Heart right ventricle (tissue), 16 donors: ENCODE measurements at regions of chr2 and their contacts with region 1.

Region 1: DNA sequence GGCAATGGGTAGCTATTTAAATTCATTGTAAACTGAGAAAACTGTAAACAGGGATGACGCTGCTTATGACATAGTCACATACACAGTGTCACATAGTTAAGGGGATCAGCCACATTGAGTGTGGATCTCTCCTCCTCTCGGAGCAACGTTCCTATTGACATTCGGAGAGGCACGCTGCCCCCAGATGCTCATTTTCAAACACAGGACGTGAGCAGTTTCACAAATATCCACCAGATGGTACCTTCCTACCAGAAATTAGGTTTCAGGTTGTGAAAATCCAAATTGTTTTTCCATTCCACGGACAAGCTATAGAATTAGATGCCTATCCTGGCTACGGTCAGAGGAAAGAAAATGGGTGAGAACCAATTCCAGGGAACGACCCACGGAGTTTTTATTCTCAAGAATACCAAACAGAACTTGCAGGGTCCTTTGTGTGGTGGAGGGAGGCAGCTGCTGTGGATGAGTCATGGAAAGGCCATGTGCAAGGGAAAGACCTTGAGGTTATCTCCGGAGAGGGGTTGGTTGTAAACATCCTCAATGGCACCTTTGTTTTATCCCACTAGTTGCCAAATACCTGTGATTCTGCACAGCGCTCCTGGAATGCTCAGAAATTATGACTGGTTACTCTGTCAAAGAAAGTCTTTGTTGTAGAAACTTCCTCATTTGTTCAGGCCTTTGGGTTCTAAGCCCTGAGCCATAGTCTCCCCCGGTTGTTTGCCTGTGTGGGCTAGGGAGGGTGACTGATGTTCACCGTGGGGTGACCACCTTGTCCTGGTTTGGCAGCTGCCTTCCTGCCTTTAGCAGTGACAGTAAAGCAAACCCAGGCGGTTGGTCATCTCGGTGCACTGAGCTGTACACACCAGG is 88.0 kb downstream of the ACTR3 start:
- DNase-seq: no peak
- ATAC-seq: peak in 3 of 8 donors; percentile 23 to 29 (median 27)
- H3K4me3 ChIP-seq: no peak overlapping the region
- H3K27ac ChIP-seq: no peak overlapping the region
- H3K4me1 ChIP-seq: peaks cover 0 to 11% (median 0%) of the 10 kb centered on the region in 9 donors
- H3K27me3 ChIP-seq: no peaks in the 10 kb centered on the region
- CTCF ChIP-seq: peak in 7 of 9 donors; percentile 19 to 54 (median 41)

Region 2: DNA sequence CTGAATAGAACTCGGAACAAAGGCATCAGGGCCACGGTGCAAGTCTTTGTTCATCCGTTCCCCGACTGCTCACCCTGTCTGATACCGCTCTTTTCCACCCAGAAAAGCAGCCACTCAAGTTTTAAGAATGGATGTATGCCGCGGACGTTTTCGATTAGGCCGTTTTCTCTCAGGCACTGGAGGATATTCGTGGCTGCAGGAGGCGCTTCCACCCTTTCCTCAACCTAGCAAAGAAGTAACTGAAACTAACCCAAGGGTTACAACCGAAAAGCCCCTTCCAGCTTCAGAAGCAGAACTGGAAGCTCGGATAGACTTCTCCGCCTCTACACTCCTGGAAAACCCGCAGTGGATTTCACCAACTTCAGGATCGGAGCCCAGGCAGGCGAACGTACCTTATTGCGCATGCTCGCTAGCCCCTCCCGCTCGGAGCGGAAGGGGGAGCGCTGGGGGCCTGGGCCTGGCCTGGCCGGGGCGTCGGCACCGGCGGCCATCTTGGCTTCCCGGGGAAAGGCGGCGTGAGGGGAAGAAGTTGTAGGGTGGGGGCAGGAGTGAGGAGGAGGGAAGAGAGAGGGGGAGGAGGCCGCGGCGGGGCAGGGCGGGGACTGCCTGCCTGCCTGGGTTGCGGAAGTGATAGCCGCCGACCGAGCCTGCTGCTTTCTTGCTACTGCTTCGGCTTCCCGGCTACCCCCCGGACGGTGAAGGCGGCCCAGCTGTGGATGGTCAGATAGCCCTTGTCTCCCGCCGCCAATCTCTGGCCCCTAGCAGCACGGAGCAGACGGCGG is 88.2 kb before region 1 on chr2 and contains the start of gene ACTR3:
- intact Hi-C with region 1: no loop called
- DNase-seq: peak; percentile 98
- ATAC-seq: peak; percentile 98 to 99 (median 98)
- H3K4me3 ChIP-seq: peak within 1 kb of the TSS; percentile 78 to 98 (median 96)
- H3K27ac ChIP-seq: peak within 1 kb of the TSS; percentile 81 to 100 (median 98)
- H3K4me1 ChIP-seq: peaks cover 3 to 75% (median 61%) of the 10 kb centered on the region in 9 donors
- H3K27me3 ChIP-seq: no peaks in the 10 kb centered on the region
- CTCF ChIP-seq: peak in 3 of 9 donors; percentile 17 to 31 (median 23)
- total RNA-seq, gene ACTR3: 97.0 to 167 (median 116) TPM

Region 3: DNA sequence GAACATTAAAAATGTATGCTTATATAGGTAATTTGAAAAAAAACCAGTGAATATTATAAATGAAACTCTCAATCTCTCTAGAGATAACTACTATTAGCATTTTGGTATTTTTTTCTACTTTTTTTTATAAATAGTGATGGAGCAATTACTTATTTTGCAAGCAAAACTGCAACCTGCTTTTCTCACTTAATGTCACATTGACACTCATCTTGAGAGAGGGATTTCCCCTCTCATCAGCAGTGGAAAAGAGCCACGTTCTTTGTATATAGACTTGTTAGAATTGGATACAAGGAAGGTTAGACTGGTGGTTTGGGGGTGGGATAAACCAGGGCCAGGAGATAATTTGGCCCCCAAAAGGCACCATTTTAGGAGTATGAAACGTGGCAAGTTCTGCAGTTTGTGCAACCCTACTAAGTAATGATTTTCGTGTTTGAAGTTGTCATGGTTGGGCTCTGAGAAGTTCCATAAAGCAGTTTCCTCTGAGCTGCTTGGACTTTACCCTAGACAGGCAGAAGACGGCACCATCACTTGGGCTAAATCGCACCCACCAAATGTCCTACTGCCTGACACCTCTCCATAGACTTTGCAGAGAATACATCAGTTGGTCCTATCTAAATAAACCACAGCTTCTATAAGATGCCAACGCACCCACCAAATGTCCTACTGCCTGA is 106.0 kb after region 1 on chr2:
- intact Hi-C with region 1: no loop called
- DNase-seq: no peak
- ATAC-seq: no peak
- H3K4me3 ChIP-seq: no peak overlapping the region
- H3K27ac ChIP-seq: no peak overlapping the region
- H3K4me1 ChIP-seq: no peaks in the 10 kb centered on the region
- H3K27me3 ChIP-seq: peaks cover 0 to 5% (median 0%) of the 10 kb centered on the region in 7 donors
- CTCF ChIP-seq: no peak

Region 4: DNA sequence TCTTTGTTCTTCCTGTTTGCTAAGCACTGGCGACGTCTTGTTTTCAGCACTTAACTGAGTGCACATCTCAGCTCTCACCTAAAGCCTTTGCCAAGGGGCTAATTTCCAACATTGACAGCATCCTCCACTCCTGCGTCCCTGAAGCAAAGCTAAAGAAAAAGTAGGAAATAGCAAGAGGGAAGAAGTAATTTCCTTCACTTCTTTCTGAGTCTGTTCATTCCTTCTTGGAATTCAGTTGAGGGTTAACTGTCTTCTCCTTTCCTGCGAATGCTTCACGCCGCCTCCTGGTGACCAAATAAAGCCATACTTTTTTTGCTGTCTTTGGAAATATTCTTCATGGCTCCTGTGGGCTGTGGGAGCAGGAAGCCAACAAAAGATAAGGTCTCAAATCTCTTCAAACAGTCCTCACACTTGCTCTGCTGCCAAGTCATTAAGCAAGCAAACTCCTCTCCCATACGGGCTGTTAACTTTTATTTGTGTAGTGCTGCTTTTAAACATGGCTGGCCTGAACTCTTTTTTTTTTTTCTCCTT is 565.4 kb after region 1 on chr2:
- intact Hi-C with region 1: loop called in 2 of 10 experiments (anchors 2 to 10 kb)
- DNase-seq: peak in 1 of 2 donors; percentile 68
- ATAC-seq: peak; percentile 71 to 95 (median 88)
- H3K4me3 ChIP-seq: no peak overlapping the region
- H3K27ac ChIP-seq: peak overlapping the region in 8 of 10 donors; percentile 21 to 67 (median 40)
- H3K4me1 ChIP-seq: peaks cover 0 to 14% (median 7%) of the 10 kb centered on the region in 9 donors
- H3K27me3 ChIP-seq: peaks cover 0 to 5% (median 0%) of the 10 kb centered on the region in 7 donors
- CTCF ChIP-seq: peak in 7 of 9 donors; percentile 30 to 59 (median 33)

Region 5: GRCh38 chr2:114550895-114551793 is 573.3 kb after region 1 on chr2:
- intact Hi-C with region 1: loop called in 8 of 10 experiments (anchors 2 to 10 kb)
- DNase-seq: peak; percentile 15 to 48
- ATAC-seq: peak in 4 of 8 donors; percentile 35 to 62 (median 46)
- H3K4me3 ChIP-seq: no peak overlapping the region
- H3K27ac ChIP-seq: no peak overlapping the region
- H3K4me1 ChIP-seq: no peaks in the 10 kb centered on the region
- H3K27me3 ChIP-seq: peaks cover 0 to 21% (median 11%) of the 10 kb centered on the region in 7 donors
- CTCF ChIP-seq: peak in 8 of 9 donors; percentile 35 to 77 (median 65)